GM13976 (cell line): ENCODE measurements at regions of chr10 and their contacts with region 1.

Region 1: DNA sequence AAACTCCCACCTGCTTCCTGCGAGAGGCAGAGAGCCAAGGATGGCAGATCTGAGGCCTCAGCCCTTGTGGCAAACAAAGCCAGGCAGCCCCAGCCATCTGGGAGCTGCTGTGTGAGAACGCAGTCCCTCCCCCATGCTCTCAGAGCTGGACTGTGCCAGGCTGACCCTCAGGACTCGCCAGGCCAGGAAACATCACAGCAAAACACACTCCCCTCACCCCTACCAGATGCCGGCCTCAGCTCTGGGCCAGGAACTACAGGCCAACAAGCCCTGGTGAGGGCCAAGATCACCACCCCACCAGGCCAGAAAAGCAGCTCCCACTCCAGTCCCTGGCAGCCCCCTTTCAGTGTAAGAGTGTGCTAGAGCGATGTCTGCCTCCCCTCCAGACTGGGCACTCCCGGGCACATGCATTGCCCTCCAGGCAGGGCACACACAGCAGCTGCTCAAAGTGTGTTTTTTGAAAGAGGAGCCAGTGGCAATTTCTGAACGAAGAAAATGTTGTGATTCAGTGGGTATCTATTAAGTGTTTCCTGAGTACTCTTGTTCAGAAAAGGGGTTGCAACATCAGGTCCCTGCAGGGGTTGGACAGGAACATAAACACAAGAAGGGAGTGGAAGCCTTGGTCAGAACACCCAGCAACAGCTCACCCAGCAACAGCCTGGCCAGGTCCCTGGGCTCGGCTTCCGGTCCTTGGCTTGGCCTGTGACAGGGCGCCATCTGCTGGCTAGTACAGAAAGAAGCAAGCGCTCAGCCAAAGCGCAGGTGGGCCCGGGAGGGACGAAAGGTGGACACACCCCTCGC is 18.3 kb downstream of the LRRC20 start:
- DNase-seq: peak; percentile 89
- CTCF ChIP-seq: peak; percentile 94

Region 2: DNA sequence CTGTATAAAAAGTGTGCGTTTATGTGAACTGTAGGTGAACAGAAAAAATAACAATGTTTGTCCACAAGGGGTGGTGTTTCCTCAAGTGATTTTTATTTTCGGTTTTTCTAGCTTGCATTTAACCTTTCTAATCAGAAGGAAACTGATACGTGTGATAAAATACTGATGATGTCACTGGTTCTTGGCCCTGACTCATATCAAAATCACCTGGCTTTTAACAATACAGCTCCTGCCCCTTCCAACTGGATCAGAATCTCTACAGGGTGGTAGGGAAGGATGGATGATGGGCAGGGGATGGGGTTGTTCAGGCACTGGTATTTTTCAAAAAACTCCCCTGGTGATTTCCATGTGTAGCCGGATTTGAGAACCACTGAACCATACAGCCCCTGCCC is 91.2 kb before region 1 on chr10:
- in situ Hi-C with region 1: loop called (anchors 5 kb)
- DNase-seq: peak; percentile 75
- CTCF ChIP-seq: peak; percentile 6